Activated CD8-positive, alpha-beta T cell treated with anti-CD3 and anti-CD28 coated beads for 36 hours (primary cell): ENCODE measurements at regions of chr2 and their contacts with region 1.

Region 1: GRCh38 chr2:197198890-197199289 is 111.7 kb downstream of the ANKRD44 start:
- DNase-seq: peak; percentile 96
- ATAC-seq: peak; percentile 86
- H3K4me3 Mint-ChIP-seq: peak overlapping the region; percentile 78
- H3K27ac Mint-ChIP-seq: peak overlapping the region; percentile 94
- H3K4me1 Mint-ChIP-seq: peaks cover 89% of the 10 kb centered on the region
- H3K27me3 Mint-ChIP-seq: no peaks in the 10 kb centered on the region
- CTCF ChIP-seq: no peak

Region 2: DNA sequence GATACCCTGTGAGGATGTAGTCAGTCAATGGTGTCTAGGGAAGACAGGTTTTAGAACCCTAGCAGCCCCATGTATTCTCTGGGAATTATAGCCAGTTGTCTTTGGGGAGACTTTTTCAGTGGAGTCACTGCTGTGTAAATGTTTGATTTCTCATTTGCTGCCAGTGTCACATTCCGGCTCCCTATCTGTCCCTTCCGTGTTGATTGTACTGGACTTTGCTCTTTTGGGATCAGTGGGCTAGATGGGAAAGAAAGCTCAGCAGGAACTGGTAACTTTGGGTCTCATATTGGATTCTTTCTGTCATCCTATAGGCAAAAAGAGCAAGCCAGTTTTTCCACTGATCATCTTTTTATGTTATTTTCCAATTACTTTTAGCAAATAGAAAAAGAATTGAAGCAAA is 469.5 kb before region 1 on chr2:
- CTCF ChIA-PET with region 1: no interaction called
- POLR2A ChIA-PET with region 1: no interaction called
- intact Hi-C with region 1: no loop called
- DNase-seq: no peak
- ATAC-seq: no peak
- H3K4me3 Mint-ChIP-seq: no peak overlapping the region
- H3K27ac Mint-ChIP-seq: no peak overlapping the region
- H3K4me1 Mint-ChIP-seq: no peaks in the 10 kb centered on the region
- H3K27me3 Mint-ChIP-seq: no peaks in the 10 kb centered on the region
- CTCF ChIP-seq: no peak

Region 3: GRCh38 chr2:197209742-197210408 is 11.0 kb after region 1 on chr2:
- CTCF ChIA-PET with region 1: interaction called, 29 read pairs
- POLR2A ChIA-PET with region 1: interaction called, 36 read pairs
- intact Hi-C with region 1: no loop called
- DNase-seq: peak; percentile 67
- ATAC-seq: peak; percentile 45
- H3K4me3 Mint-ChIP-seq: peak overlapping the region; percentile 64
- H3K27ac Mint-ChIP-seq: peak overlapping the region; percentile 97
- H3K4me1 Mint-ChIP-seq: peaks cover 96% of the 10 kb centered on the region
- H3K27me3 Mint-ChIP-seq: no peaks in the 10 kb centered on the region
- CTCF ChIP-seq: no peak

Region 4: GRCh38 chr2:197239434-197239833 is 40.5 kb after region 1 on chr2:
- CTCF ChIA-PET with region 1: interaction called, 4 read pairs
- POLR2A ChIA-PET with region 1: interaction called, 3 read pairs
- intact Hi-C with region 1: loop called (anchors 5 kb)
- DNase-seq: no peak
- ATAC-seq: peak; percentile 45
- H3K4me3 Mint-ChIP-seq: peak overlapping the region; percentile 75
- H3K27ac Mint-ChIP-seq: peak overlapping the region; percentile 91
- H3K4me1 Mint-ChIP-seq: peaks cover 84% of the 10 kb centered on the region
- H3K27me3 Mint-ChIP-seq: no peaks in the 10 kb centered on the region
- CTCF ChIP-seq: no peak